ENCODE measurements at regions of chr15 and their contacts with region 1.

Region 1: DNA sequence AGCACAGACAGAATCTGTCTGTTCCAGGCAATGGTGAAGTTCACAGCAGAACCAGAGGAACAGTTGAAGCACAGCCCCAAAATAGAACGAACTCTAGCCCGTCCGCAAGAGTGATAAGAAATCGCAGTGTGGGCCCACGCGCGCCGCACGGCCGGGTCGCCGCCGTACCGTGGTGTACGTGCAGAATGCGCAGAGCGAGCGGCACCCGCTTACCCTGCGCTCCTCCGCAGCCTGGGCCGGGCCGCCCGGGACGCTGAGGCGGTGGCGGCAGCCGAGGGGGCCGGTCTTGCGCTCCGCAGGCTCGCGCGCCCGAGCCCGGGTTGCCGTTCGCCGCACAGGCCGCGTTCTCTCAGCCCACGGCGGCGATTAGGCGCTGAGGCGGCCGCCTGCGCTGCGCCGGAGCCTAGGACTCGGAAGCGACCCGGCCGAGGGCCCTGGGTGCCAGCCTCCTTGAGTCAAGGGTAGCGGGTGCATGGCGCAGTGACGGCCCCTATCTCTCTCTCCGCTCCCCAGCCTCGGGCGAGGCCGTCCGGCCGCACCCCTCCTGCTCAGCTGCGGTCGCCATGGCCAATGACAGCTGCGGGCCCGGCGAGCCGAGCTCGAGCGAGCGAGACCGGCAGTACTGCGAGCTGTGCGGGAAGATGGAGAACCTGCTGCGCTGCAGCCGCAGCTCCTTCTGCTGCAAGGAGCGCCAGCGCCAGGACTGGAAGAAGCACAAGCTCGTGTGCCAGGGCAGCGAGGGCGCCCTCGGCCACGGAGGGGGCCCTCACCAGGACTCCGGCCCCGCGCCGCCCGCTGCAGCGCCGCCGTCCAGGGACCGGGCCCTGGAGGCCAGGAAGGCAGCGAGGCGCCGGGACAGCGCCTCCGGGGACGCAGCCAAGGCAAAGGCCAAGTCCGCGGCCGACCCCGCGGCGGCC is 20.5 kb downstream of the WDR73 start:
- DNase-seq: peak; percentile 86

Region 2: GRCh38 chr15:84600851-84601838 is 32.4 kb before region 1 on chr15 and contains the start of gene ZSCAN2:
- intact Hi-C with region 1: loop called (anchors 2 kb)
- DNase-seq: peak; percentile 98
- total RNA-seq, gene ZSCAN2: 4.6 TPM